ENCODE measurements at regions of chr18 and their contacts with region 1.

Region 1: GRCh38 chr18:741931-742512 is 29.6 kb upstream of the ENOSF1 start:
- DNase-seq: peak; percentile 53
- H3K27ac ChIP-seq: no peak overlapping the region
- CTCF ChIP-seq: peak; percentile 73

Region 2: DNA sequence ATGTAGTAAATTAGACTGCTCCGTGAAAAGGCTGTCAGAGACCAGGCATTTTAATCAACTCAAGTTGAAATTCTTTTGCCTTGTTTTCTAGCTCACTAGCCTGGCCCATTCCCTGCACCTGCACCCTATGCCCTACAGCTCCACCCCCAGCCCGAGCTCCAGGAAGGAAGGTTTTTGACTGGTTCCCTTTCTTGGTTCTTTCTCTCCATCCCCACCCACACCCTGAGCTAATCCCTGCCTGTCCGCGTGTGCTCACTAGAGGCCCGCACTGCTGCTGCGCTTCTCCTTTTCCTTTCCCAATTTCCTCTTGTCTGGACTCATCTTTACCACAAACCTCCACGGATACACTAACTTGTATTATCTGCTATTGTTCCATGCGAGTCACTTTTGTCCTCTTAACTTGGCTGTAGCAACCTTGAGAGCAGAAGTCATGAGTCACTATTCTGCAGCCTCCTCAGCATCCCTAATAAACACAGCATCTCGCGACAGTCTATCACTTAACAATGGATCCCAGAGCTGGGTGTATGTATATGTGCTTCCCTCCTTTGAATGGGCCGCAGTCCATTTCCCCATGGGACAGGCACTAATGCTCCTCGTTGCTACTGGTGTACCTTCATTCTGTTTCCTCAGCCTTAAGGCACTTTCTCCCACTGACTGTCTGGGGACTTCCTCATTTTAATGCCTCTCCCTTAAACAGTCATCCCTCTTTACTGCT is 278.0 kb before region 1 on chr18:
- CTCF ChIA-PET with region 1: no interaction called
- POLR2A ChIA-PET with region 1: no interaction called
- DNase-seq: no peak
- H3K27ac ChIP-seq: no peak overlapping the region
- CTCF ChIP-seq: no peak

Region 3: GRCh38 chr18:830315-830901 is 88.4 kb after region 1 on chr18:
- CTCF ChIA-PET with region 1: interaction called, 16 read pairs
- POLR2A ChIA-PET with region 1: no interaction called
- DNase-seq: no peak
- H3K27ac ChIP-seq: no peak overlapping the region
- CTCF ChIP-seq: no peak

Region 4: GRCh38 chr18:950882-951539 is 209.0 kb after region 1 on chr18:
- CTCF ChIA-PET with region 1: no interaction called
- POLR2A ChIA-PET with region 1: no interaction called
- DNase-seq: peak; percentile 28
- H3K27ac ChIP-seq: no peak overlapping the region
- CTCF ChIP-seq: no peak

Measured in RWPE1 (cell line).